ENCODE measurements at regions of chr17 and their contacts with region 1.

Region 1: DNA sequence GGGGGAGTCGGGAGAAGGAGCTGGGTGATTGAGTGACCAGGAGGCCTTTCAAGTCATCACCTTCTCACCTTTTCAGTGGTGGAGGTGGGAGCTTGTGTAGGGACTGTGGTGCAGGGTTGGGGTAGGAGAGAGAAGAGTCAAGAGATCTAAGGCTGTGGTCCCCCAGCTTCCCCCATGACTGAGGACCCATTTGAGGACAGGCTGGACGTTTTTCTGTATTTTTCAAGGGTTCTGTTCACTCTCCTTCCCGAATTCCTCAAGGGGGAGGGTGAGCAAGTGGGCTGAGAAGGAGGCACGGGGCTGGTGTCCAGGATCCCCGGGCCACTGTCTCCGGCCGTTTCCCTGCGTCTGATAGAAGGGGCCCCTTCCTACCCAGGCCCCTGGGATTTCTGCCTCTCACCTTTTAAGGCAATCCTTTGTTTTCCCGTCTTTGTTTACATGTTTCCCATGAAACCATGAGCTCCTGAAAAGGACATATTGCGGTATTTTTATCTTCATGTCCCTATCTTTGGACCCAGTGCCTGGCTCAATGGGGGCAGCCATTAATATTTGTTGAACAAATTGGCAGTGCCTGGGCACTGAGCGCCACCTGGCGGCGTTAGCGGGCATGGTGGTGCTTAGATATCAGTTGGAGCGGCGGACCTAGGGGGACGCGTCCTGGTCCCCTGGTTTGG is 9.2 kb upstream of the CD300A start:
- DNase-seq: peak; percentile 22 to 72 (median 50)
- ATAC-seq: peak; percentile 68
- H3K4me3 ChIP-seq: no peak overlapping the region
- H3K4me3 Mint-ChIP-seq: peak overlapping the region in 3 of 10 donors; percentile 17 to 30 (median 25)
- H3K27ac ChIP-seq: no peak overlapping the region
- H3K27ac Mint-ChIP-seq: peak overlapping the region in 3 of 9 donors; percentile 18 to 65 (median 30)
- H3K4me1 ChIP-seq: peaks cover 5 to 52% of the 10 kb centered on the region in 2 donors
- H3K4me1 Mint-ChIP-seq: peaks cover 0 to 43% (median 12%) of the 10 kb centered on the region in 7 donors
- H3K27me3 ChIP-seq: no peaks in the 10 kb centered on the region
- H3K27me3 Mint-ChIP-seq: peaks cover 0 to 19% (median 0%) of the 10 kb centered on the region in 5 donors

Region 2: DNA sequence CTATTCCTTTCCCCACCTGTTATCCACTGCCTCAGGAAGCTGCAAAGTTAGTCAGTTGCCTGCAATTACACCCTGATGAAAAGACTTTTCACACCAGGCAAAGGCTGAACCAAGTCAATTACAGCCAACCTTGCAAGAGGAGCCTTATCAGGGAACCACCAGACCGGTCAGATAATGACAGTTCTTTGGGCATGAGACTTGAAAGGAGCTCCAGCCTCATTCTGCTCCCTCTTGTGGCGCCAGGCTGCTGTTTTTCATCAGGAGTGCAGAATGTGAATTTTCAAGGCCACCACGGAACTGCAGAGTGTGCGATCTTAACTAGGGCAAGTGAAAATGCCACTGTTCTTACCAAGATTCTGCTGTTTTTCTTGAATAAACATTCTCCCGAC is 160.7 kb before region 1 on chr17:
- CTCF ChIA-PET with region 1: no interaction called
- POLR2A ChIA-PET with region 1: no interaction called
- intact Hi-C with region 1: loop called (anchors 1 to 10 kb)
- DNase-seq: no peak
- ATAC-seq: peak; percentile 61
- H3K4me3 ChIP-seq: no peak overlapping the region
- H3K4me3 Mint-ChIP-seq: no peak overlapping the region
- H3K27ac ChIP-seq: no peak overlapping the region
- H3K27ac Mint-ChIP-seq: peak overlapping the region in 2 of 9 donors; percentile 29 to 51
- H3K4me1 ChIP-seq: peaks cover 0 to 8% of the 10 kb centered on the region in 2 donors
- H3K4me1 Mint-ChIP-seq: peaks cover 0 to 25% (median 4%) of the 10 kb centered on the region in 7 donors
- H3K27me3 ChIP-seq: no peaks in the 10 kb centered on the region
- H3K27me3 Mint-ChIP-seq: peaks cover 0 to 9% (median 0%) of the 10 kb centered on the region in 5 donors

Region 3: GRCh38 chr17:74368092-74369081 is 88.9 kb before region 1 on chr17:
- CTCF ChIA-PET with region 1: interaction called, 40 read pairs
- POLR2A ChIA-PET with region 1: no interaction called
- intact Hi-C with region 1: loop called in 1 of 2 experiments (anchors 1 kb)
- DNase-seq: peak; percentile 39 to 78 (median 59)
- ATAC-seq: peak; percentile 87
- H3K4me3 ChIP-seq: peak overlapping the region; percentile 43
- H3K4me3 Mint-ChIP-seq: peak overlapping the region in 9 of 10 donors; percentile 53 to 76 (median 68)
- H3K27ac ChIP-seq: no peak overlapping the region
- H3K27ac Mint-ChIP-seq: peak overlapping the region in 1 of 9 donors; percentile 36
- H3K4me1 ChIP-seq: peaks cover 12 to 13% of the 10 kb centered on the region in 2 donors
- H3K4me1 Mint-ChIP-seq: peaks cover 8 to 15% (median 12%) of the 10 kb centered on the region in 7 donors
- H3K27me3 ChIP-seq: no peaks in the 10 kb centered on the region
- H3K27me3 Mint-ChIP-seq: peaks cover 0 to 9% (median 0%) of the 10 kb centered on the region in 5 donors

Region 4: DNA sequence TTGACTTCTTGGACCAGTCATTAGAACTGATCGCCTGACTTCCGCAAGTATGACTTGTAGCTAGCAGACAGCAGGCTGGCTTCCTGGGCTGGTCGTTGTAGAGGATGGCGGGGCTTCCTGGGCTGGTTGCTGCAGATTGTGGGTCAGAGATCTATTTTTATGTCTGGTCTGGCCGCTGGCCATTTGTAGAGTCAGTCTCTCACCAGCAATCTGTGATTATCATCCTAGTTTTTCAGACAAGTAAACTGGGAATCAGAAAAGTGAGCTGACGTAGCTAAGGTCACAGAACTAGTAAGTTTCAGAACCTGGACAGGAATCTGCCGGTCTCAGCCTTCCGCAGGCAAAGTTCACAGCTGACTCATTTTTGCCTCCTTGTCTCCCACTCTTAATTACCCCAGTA is 70.9 kb before region 1 on chr17:
- CTCF ChIA-PET with region 1: no interaction called
- POLR2A ChIA-PET with region 1: no interaction called
- intact Hi-C with region 1: no loop called
- DNase-seq: no peak
- ATAC-seq: no peak
- H3K4me3 ChIP-seq: no peak overlapping the region
- H3K4me3 Mint-ChIP-seq: no peak overlapping the region
- H3K27ac ChIP-seq: no peak overlapping the region
- H3K27ac Mint-ChIP-seq: peak overlapping the region in 1 of 9 donors; percentile 38
- H3K4me1 ChIP-seq: no peaks in the 10 kb centered on the region
- H3K4me1 Mint-ChIP-seq: no peaks in the 10 kb centered on the region
- H3K27me3 ChIP-seq: no peaks in the 10 kb centered on the region
- H3K27me3 Mint-ChIP-seq: peaks cover 0 to 16% (median 5%) of the 10 kb centered on the region in 5 donors

Region 5: GRCh38 chr17:74467221-74467951 is 10.1 kb after region 1 on chr17:
- CTCF ChIA-PET with region 1: interaction called, 4 read pairs
- POLR2A ChIA-PET with region 1: interaction called, 3 read pairs
- intact Hi-C with region 1: loop called in 1 of 2 experiments (anchors 1 kb)
- DNase-seq: no peak
- ATAC-seq: peak; percentile 34
- H3K4me3 ChIP-seq: peak overlapping the region; percentile 37
- H3K4me3 Mint-ChIP-seq: peak overlapping the region in 2 of 10 donors; percentile 77 to 81
- H3K27ac ChIP-seq: no peak overlapping the region
- H3K27ac Mint-ChIP-seq: peak overlapping the region in 6 of 9 donors; percentile 55 to 90 (median 75)
- H3K4me1 ChIP-seq: peaks cover 47 to 67% of the 10 kb centered on the region in 2 donors
- H3K4me1 Mint-ChIP-seq: peaks cover 10 to 46% (median 28%) of the 10 kb centered on the region in 7 donors
- H3K27me3 ChIP-seq: no peaks in the 10 kb centered on the region
- H3K27me3 Mint-ChIP-seq: peaks cover 0 to 5% (median 0%) of the 10 kb centered on the region in 5 donors

Measured in naive thymus-derived CD4-positive, alpha-beta T cell (primary cell).